Posterior vena cava (tissue), 2 donors: ENCODE measurements at regions of chr17 and their contacts with region 1.

Region 1: DNA sequence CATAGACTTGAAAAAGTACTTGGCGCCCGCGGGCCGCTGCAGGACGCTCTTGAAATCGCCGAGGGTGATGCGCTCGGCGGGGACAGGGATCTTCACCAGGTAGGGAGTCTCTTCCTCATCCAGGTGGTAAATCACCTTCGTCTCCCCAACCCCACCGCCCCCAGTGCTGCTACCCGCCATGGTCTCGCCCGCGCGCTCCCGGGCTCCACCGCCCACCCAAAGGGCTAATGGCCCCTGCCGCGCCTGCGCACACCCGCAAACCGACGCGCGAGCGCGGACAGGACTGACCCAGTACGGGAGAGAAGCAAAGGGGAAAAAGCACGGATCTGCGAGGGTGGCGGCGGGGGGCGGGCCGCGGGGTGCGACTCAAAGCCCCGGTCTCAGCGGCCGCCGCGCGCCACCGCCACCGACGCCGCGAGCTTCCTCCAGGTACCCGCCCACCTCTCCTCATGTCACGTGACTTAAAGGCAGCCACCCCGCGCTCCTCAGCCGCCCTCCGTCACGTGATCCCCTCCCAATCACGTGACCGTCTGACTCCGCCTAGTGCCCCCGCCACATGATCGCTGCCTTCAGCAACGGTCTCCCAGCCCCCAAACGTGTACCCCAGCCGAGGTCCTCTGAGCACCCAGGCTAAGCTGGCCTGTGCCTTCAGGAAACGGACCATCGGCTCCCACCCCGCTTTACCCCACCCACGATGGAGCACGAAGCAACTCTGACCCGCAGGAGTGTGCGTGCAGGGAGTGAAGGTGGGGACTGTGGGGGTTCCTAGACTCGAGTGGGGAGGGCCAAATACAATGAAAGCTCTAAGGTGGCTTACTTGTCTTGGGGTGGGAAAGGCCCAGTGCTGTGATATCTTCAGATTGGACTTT is at the start of gene DVL2:
- DNase-seq: peak; percentile 98
- total RNA-seq, gene DVL2: 21.9 to 26.7 TPM

Region 2: DNA sequence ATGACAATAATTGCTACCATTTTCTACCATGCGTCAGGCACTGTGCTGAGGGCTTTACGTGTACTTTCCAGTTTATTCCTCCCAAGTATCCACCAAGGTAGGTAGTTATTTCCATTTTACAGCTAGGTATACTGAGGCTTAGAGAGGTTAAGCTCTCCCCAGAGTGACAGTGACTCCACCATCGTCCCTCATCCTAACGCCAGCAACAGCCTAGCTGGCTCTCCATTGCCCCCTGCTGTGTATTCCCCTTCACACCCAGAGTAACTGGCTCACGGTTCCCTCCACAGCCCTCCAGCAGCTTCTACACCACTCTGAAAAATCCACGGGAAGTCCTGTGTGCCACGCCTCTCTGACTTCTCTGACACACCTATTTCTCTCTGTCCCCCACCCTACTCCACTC is 48.1 kb before region 1 on chr17:
- intact Hi-C with region 1: no loop called
- DNase-seq: no peak

Region 3: DNA sequence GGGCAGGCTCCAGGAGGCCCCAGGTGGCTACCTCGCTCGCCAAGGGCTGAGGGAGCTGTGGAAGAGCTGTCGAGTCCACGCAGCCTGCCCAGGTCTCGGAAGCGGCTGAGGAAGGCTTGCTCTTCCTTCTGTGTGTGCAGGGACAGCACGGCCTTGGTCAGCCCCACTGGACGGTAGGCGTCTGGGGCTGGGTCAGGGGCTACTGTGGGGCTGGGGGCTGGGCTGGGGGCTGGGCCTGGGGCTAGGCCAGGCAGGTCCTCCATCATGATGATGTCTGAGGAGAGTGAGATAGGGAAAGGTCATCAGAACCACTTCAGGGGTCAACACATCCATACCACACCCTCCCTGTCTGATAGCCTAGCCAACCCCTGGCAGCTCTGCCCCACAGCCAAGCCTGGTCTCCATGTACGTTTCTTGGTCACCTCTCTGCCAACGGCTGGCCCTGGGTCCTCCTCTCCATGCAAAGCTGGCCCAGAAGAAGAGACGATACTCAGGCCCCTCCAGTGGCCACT is 910.5 kb after region 1 on chr17:
- intact Hi-C with region 1: loop called in 1 of 2 experiments (anchors 5 kb)
- DNase-seq: no peak